Transverse colon (tissue), 4 donors: ENCODE measurements at regions of chr1 and their contacts with region 1.

Region 1: DNA sequence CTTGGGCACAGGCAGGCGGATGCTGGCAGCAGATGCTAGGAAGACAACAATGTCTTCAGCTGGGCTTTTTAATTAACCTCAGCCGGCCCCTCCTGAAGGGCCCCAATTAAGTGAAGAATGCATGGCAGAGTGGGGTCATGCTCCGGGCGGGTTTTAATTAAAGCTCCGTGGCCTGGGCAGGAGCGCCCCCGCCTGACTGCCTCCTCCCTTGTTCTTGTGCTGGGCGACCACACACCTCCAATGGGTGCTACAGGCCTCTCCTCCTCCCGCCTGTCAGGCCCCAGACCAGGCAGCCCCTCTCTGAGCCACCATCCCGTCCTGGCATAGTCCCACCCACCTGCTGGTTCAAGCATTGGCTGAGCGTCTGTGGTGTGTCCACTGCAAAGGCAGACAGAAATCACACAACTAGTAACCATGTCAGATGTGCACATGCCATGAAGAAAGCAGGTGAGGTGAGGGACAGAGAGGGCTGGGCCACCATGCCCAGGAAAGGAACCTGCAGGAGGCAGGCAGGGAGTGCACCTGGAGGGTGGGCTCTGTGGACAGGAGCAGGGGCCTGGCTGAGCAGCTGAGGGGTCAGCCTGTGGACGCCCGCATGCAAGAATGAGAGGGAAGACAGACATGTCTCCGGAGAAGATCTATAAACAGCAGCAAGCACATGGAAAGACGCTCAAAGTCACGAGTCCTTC is 8.5 kb upstream of the ARF1 start:
- DNase-seq: no peak
- H3K4me3 ChIP-seq: no peak overlapping the region
- H3K27ac ChIP-seq: no peak overlapping the region
- H3K4me1 ChIP-seq: no peaks in the 10 kb centered on the region
- H3K27me3 ChIP-seq: peaks cover 11% of the 10 kb centered on the region
- CTCF ChIP-seq: peak in 1 of 5 experiments; percentile 16
- EP300 ChIP-seq: no peak
- POLR2A ChIP-seq: no peak

Region 2: GRCh38 chr1:227489572-227489971 is 584.4 kb before region 1 on chr1:
- in situ Hi-C with region 1: no loop called
- intact Hi-C with region 1: loop called (anchors 10 kb)
- DNase-seq: no peak
- H3K4me3 ChIP-seq: no peak overlapping the region
- H3K27ac ChIP-seq: no peak overlapping the region
- H3K4me1 ChIP-seq: no peaks in the 10 kb centered on the region
- H3K27me3 ChIP-seq: no peaks in the 10 kb centered on the region
- CTCF ChIP-seq: no peak
- EP300 ChIP-seq: no peak
- POLR2A ChIP-seq: no peak

Region 3: DNA sequence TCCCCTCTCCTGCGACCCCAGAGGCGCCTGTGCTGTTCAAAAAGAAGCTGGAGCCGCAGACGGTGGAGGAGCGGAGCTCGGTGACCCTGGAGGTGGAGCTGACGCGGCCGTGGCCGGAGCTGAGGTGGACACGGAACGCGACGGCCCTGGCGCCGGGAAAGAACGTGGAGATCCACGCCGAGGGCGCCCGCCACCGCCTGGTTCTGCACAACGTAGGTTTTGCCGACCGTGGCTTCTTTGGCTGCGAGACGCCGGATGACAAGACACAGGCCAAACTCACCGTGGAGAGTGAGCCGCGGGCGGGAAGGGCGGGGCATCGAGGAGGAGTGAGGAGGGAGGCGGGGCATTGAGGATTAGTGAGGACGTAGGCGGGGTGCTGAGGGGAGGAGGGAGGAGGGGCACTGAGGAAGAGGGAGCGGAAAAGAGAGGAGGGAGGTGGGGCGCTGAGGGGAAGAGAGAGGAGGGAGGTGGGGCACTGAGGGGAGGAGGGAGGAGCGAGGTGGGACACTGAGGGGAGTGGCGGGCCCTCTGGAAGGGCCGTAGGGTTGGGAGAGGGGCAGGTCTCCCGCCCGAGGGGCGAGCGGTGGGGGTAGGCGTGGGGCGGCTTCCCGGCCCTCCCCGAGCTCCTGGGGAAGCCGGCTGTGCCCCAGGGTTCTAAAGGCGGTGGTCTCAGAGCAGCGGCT is 201.9 kb after region 1 on chr1:
- in situ Hi-C with region 1: no loop called
- intact Hi-C with region 1: no loop called
- DNase-seq: peak; percentile 93
- H3K4me3 ChIP-seq: peak overlapping the region; percentile 52 to 73 (median 56)
- H3K27ac ChIP-seq: peak overlapping the region; percentile 56 to 80 (median 68)
- H3K4me1 ChIP-seq: peaks cover 0 to 16% (median 10%) of the 10 kb centered on the region in 4 donors
- H3K27me3 ChIP-seq: no peaks in the 10 kb centered on the region
- CTCF ChIP-seq: no peak
- EP300 ChIP-seq: no peak
- POLR2A ChIP-seq: no peak